ENCODE measurements at regions of chr19 and their contacts with region 1.

Region 1: GRCh38 chr19:7868676-7869452 is 5.3 kb downstream of the PRR36 start:
- DNase-seq: peak; percentile 87
- ATAC-seq: peak; percentile 58
- H3K4me3 ChIP-seq: peak overlapping the region; percentile 53 to 74 (median 67)
- H3K27ac ChIP-seq: peak overlapping the region; percentile 78
- H3K4me1 ChIP-seq: peaks cover 70% of the 10 kb centered on the region
- H3K27me3 ChIP-seq: no peaks in the 10 kb centered on the region
- CTCF ChIP-seq: peak; percentile 70; the same call in 1 of the 2 replicates
- EP300 ChIP-seq: no peak
- POLR2A ChIP-seq: peak; percentile 46 to 48; a peak in 3 of 4 replicates
- RAD21 ChIP-seq: peak; percentile 83

Region 2: GRCh38 chr19:6737284-6738046 is 1131.4 kb before region 1 on chr19 and contains the start of gene GPR108:
- CTCF ChIA-PET with region 1: no interaction called
- POLR2A ChIA-PET with region 1: no interaction called
- in situ Hi-C with region 1: no loop called
- intact Hi-C with region 1: loop called (anchors 10 kb)
- DNase-seq: peak; percentile 100
- ATAC-seq: peak; percentile 72
- H3K4me3 ChIP-seq: peak within 1 kb of the TSS; percentile 82 to 100 (median 90)
- H3K27ac ChIP-seq: peak within 1 kb of the TSS; percentile 89
- H3K4me1 ChIP-seq: peaks cover 56% of the 10 kb centered on the region
- H3K27me3 ChIP-seq: no peaks in the 10 kb centered on the region; a peak in 1 of 5 replicates
- CTCF ChIP-seq: 0 out of 2 replicates have a peak, but pooled peaks have one; percentile 13
- EP300 ChIP-seq: no peak
- POLR2A ChIP-seq: peak; percentile 56 to 67; a peak in 3 of 4 replicates
- RAD21 ChIP-seq: peak; percentile 49; the same call in 1 of the 2 replicates
- total RNA-seq, gene GPR108: 24.1 and 36.4 TPM in 2 replicates

Region 3: DNA sequence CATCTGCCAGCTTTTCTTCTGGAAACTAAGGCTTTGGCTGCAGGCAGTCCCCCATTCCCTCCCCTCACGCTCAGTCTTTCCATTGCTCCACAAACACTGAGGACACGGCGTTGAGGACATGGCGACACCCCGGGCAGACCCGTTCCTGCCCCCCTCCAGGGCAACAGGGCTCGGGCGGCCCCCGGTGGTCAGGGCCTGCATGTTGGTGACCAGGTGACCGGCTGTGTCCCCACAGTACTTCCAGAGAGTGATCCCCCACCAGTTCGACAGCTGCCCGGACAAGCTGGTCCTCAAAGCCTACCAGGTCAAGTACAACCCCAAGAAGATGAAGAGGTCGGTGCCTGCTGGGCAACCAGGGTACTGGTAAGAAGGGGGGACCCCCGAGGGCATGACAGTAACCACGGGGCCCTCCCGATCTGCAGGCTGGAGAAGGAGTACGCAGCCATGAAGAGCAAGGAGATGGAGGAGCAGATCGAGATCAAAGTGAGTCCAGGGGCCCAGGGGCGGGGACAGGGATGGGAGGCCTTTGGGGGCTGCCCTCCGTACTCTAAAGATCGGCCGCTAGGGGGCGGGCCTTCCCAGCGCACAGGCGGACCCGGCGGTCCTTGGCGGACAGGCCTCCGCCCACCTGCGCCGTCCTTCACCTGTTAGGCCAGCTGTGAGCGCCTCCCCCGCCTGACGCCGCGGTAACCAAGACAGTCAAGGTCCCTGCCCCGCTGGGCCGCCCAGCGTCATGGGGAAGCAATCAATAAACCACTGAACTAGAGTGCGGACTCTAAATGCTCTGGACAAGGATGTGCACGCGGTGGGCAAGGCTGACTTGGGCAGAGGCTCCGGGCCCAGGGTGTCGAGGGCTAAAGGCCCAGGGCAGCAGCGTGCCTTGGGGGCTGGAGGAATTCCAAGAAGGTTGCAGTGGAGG is 15.8 kb before region 1 on chr19:
- CTCF ChIA-PET with region 1: interaction called, 4 read pairs
- POLR2A ChIA-PET with region 1: interaction called, 21 read pairs
- in situ Hi-C with region 1: no loop called
- intact Hi-C with region 1: no loop called
- DNase-seq: peak; percentile 90
- ATAC-seq: peak; percentile 93
- H3K4me3 ChIP-seq: peak overlapping the region in 1 of 3 experiments; percentile 60; a peak in 3 of 6 replicates
- H3K27ac ChIP-seq: peak overlapping the region; percentile 58
- H3K4me1 ChIP-seq: peaks cover 24% of the 10 kb centered on the region
- H3K27me3 ChIP-seq: peaks cover 0 to 5% of the 10 kb centered on the region in 2 experiments; a peak in 2 of 5 replicates
- CTCF ChIP-seq: peak; percentile 93
- EP300 ChIP-seq: no peak; a peak in 1 of 4 replicates
- POLR2A ChIP-seq: no peak
- RAD21 ChIP-seq: peak; percentile 98

Region 4: DNA sequence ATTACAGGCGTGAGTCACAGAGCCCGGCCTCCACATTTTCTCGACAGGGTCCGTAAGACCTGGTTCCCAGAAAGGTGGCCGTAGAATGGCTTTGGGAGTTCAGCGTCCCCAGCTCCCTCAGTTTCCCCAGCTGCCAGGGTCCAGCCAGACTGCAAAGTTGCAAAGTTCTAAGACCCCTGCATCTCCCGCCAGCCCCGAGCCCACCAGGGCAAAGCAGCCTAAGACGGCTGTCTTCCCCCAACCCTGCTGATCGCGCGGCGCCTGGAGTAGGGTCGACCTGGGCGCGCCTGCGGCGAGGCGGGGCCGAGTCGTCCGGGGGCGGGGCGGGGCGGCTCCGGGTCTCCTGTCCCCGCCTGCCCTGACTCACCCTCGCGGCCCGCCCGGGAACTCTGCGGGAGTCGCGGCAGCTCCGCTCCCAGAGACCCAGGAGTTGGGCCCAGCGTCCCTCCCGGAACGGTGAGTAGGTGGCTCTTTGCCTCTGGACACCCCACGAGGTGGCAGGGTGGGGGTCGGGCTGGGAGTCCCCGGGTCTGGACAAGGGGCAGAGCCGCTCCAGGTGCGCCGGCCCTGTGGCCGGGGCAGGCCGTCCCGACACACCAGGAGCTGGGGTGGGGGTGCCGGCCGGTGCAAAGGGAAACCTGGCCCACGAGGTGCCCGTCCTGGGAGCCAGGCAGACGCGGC is 19.4 kb after region 1 on chr19 and contains the start of gene LRRC8E:
- CTCF ChIA-PET with region 1: no interaction called
- POLR2A ChIA-PET with region 1: interaction called, 52 read pairs
- in situ Hi-C with region 1: no loop called
- intact Hi-C with region 1: no loop called
- DNase-seq: peak; percentile 59
- ATAC-seq: peak; percentile 94
- H3K4me3 ChIP-seq: peak within 1 kb of the TSS; percentile 82 to 93 (median 90)
- H3K27ac ChIP-seq: peak within 1 kb of the TSS; percentile 58
- H3K4me1 ChIP-seq: peaks cover 66% of the 10 kb centered on the region
- H3K27me3 ChIP-seq: no peaks in the 10 kb centered on the region
- CTCF ChIP-seq: no peak
- EP300 ChIP-seq: no peak
- POLR2A ChIP-seq: peak; percentile 71 to 85
- RAD21 ChIP-seq: no peak
- total RNA-seq, gene LRRC8E: 4.0 and 8.0 TPM in 2 replicates

Region 5: GRCh38 chr19:7903244-7904073 is 34.6 kb after region 1 on chr19 and contains the start of gene MAP2K7:
- CTCF ChIA-PET with region 1: interaction called, 5 read pairs
- POLR2A ChIA-PET with region 1: interaction called, 52 read pairs
- in situ Hi-C with region 1: no loop called
- intact Hi-C with region 1: loop called (anchors 1 kb)
- DNase-seq: peak; percentile 97
- ATAC-seq: peak; percentile 66
- H3K4me3 ChIP-seq: peak within 1 kb of the TSS; percentile 90 to 100 (median 95)
- H3K27ac ChIP-seq: peak within 1 kb of the TSS; percentile 91
- H3K4me1 ChIP-seq: peaks cover 43% of the 10 kb centered on the region
- H3K27me3 ChIP-seq: no peaks in the 10 kb centered on the region; a peak in 1 of 5 replicates
- CTCF ChIP-seq: peak; percentile 99
- EP300 ChIP-seq: no peak
- POLR2A ChIP-seq: peak; percentile 88 to 99
- RAD21 ChIP-seq: peak; percentile 72; the same call in 1 of the 2 replicates
- total RNA-seq, gene MAP2K7: 8.7 and 10.8 TPM in 2 replicates

Region 6: DNA sequence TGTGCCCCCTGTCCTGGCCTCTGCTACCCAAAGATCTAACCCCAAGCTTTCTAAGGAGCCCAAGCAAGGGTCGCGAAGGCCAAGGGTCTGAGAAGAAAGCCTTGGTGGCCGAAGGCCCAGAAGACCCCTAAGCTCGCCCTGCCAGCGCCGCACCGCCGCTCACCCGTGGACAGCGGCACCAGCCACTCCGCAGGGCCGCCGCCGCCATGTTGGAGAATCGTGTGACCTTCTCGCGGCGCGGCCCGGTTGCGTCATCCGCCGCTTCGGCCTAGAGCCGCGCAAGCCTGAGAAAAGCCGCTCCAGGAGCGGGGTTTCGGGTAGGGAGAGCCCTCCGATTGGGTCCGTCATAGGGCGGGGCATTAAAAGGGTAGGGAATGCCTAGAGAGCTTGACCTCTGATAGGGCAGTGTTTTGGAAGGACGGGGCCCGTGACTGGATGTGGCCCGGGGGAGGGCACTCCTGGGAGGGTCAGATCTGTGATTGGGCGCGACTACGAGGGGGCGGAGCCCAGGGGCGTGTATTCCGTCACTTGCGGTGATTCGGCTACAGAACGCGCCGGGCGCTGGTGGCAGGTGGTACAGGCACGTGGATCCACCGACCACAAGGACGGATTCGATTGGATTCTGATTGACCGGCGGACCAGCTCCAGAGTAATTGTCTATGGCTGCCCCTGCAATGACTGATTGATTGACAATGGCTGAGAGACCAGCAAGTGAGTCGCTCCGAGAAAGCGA is 74.7 kb after region 1 on chr19 and contains the start of gene TIMM44:
- CTCF ChIA-PET with region 1: no interaction called
- POLR2A ChIA-PET with region 1: interaction called, 16 read pairs
- in situ Hi-C with region 1: no loop called
- intact Hi-C with region 1: no loop called
- DNase-seq: peak; percentile 99
- ATAC-seq: peak; percentile 98
- H3K4me3 ChIP-seq: peak within 1 kb of the TSS; percentile 65 to 98 (median 91)
- H3K27ac ChIP-seq: peak within 1 kb of the TSS; percentile 90
- H3K4me1 ChIP-seq: peaks cover 38% of the 10 kb centered on the region
- H3K27me3 ChIP-seq: peaks cover 0 to 3% of the 10 kb centered on the region in 2 experiments; a peak in 1 of 5 replicates
- CTCF ChIP-seq: no peak
- EP300 ChIP-seq: no peak
- POLR2A ChIP-seq: peak; percentile 98 to 99
- RAD21 ChIP-seq: peak; percentile 59
- total RNA-seq, gene TIMM44: 71.5 and 72.6 TPM in 2 replicates

Region 7: GRCh38 chr19:7968796-7969554 is 100.1 kb after region 1 on chr19:
- CTCF ChIA-PET with region 1: no interaction called
- POLR2A ChIA-PET with region 1: no interaction called
- in situ Hi-C with region 1: no loop called
- intact Hi-C with region 1: no loop called
- DNase-seq: no peak
- ATAC-seq: no peak
- H3K4me3 ChIP-seq: no peak overlapping the region
- H3K27ac ChIP-seq: no peak overlapping the region
- H3K4me1 ChIP-seq: no peaks in the 10 kb centered on the region
- H3K27me3 ChIP-seq: no peaks in the 10 kb centered on the region
- CTCF ChIP-seq: no peak
- EP300 ChIP-seq: no peak
- POLR2A ChIP-seq: no peak
- RAD21 ChIP-seq: no peak

Measured in HepG2 (cell line).